GM18951 (cell line): ENCODE measurements at regions of chr7 and their contacts with region 1.

Region 1: DNA sequence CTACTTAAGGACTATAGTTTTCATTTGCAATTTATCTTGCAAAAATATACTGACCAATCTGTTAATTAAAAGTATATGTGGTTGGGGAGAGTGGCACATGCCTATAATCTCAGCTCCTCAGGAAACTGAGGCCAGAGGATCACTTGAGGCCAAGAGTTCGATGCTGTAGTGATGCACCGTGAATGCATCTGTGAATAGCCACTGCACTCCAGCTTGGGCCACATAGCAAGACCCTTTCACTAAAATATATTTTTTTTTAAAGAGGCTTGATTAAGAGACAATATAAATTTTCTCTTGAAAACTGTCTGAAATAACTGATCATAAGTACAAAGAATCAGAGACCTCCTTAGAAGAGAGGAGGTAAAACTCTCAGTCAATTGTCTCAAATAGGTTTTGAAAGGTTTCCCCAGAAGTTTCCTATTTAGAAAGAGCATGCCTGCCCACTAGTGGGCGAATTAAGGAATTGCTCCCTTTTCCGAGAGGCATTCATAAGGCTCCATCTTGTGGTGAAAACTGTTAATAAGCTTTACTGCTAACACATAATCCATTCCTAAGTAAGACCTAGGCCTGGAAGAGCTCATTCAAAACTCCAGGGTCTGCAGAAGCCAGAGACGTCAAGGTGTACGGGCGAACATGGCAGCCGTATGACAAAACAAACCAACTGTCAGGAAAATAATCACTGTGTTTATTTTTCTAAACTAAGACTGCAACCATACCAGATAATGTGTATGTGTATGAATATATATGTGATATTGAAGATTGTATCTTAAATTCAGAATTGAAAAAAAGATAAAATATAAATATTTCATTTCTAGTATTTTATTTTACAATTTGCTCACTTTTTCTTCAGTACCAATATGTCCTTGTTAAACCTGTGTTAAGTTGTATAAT is 6.8 kb upstream of the TAS2R40 start:
- POLR2A ChIP-seq: no peak

Region 2: GRCh38 chr7:142853739-142854371 is 361.2 kb before region 1 on chr7:
- in situ Hi-C with region 1: loop called (anchors 25 kb)
- POLR2A ChIP-seq: no peak

Region 3: DNA sequence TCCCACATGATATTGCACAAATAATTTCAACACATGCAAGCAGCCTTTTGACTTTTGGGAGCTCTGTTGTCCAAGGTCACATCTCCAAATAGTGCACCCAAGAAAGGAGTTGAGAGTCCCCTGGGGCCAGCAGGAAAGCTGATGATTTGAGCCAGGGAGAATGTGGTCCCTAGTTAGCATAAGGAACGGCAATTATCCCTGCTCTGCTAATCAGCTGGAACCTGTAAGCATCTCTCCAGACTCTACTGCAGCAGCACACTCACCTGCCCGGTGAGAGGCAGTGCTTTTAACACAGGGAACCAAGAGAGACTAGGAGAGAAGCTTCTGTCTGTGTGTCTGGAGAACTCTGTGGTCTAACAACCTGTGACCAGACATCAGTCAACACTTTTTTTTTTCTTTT is 298.5 kb before region 1 on chr7:
- in situ Hi-C with region 1: no loop called
- POLR2A ChIP-seq: no peak

Region 4: DNA sequence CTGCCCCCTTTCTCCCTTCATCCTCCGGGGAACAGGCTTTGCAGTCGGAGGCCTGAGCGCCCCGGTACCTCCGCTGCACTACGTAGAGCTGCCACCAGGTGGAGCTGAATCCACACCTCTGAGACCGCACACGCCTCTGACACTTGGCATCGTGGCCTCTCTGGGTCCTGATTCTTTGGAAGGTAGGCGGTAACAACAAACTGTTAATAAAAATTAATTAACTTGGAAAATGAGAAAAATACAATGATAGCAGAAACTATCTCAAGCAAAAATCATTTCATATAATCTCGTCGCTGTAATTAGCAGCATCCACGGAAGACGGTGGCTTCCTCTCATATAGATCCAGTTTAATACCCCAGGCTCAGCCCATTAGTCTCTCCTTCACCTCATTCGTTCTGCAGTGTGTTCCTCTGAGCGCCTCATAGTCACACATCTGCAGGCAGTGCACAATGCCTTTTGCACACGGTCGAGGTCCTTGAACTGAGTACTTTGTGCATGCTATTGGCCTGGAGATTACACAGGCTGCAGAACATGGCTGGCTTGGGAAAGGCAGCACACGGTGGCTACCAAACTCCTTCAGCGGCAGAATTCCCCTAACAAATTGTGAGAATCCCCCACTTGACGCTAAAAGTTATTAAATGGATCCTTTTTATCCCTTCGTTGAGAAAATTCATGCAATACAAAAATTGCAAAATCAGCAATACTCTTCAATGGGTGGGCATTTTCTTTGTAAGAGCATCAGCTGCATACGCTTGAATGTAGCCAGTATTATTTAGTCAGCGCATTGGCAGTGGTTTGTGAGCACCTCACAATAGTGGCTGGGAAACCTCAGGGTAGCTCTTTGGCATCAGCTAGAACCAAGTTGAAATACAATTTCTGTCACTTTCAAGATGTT is 206.8 kb before region 1 on chr7:
- in situ Hi-C with region 1: loop called (anchors 5 kb)
- POLR2A ChIP-seq: no peak